ENCODE measurements at regions of chr4 and their contacts with region 1.

Region 1: DNA sequence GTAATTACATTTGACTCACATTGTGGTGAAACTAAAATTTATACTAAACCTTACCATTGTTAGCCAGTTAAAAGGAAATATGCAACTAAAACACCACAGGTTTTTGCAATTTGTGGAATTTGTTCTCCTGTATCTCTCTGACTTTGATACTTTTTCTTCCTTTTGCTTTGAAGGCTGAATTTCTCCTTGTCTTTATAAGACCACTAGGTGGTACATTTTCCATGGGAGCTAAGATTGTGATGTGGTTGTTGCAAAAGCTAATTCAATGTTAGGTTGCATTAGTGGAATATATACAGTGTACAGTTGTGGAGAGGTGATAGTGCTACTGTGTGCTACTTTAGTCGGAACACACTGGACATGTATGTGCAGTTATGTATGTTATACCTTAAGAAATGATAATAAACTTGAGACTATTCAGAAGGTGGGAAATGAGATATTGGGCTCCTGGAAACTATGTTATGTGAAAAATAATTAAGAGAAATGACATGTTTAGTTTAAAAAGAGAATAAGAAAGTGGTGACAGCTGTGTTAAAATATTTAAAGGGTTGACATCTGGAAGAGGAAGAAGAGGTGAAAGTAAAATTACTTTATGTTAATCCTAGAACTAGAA is 70.3 kb downstream of the ARL9 start:
- DNase-seq: peak; percentile 8
- ATAC-seq: peak; percentile 64
- H3K4me3 ChIP-seq: no peak overlapping the region
- H3K27ac ChIP-seq: no peak overlapping the region
- H3K4me1 ChIP-seq: no peaks in the 10 kb centered on the region
- H3K27me3 ChIP-seq: no peaks in the 10 kb centered on the region
- CTCF ChIP-seq: peak; percentile 42
- EP300 ChIP-seq: no peak
- POLR2A ChIP-seq: no peak
- RAD21 ChIP-seq: no peak

Region 2: GRCh38 chr4:55524844-55525571 is 1050.9 kb before region 1 on chr4:
- CTCF ChIA-PET with region 1: no interaction called
- POLR2A ChIA-PET with region 1: no interaction called
- in situ Hi-C with region 1: no loop called
- intact Hi-C with region 1: no loop called
- DNase-seq: no peak
- ATAC-seq: no peak
- H3K4me3 ChIP-seq: no peak overlapping the region
- H3K27ac ChIP-seq: no peak overlapping the region
- H3K4me1 ChIP-seq: no peaks in the 10 kb centered on the region
- H3K27me3 ChIP-seq: no peaks in the 10 kb centered on the region
- CTCF ChIP-seq: no peak
- EP300 ChIP-seq: no peak
- POLR2A ChIP-seq: no peak
- RAD21 ChIP-seq: no peak

Region 3: GRCh38 chr4:56467284-56468096 is 108.4 kb before region 1 on chr4 and contains the start of gene SRP72:
- CTCF ChIA-PET with region 1: no interaction called
- POLR2A ChIA-PET with region 1: no interaction called
- in situ Hi-C with region 1: no loop called
- intact Hi-C with region 1: no loop called
- DNase-seq: peak; percentile 82
- ATAC-seq: peak; percentile 91
- H3K4me3 ChIP-seq: peak within 1 kb of the TSS; percentile 79 to 90 (median 83)
- H3K27ac ChIP-seq: peak within 1 kb of the TSS; percentile 83
- H3K4me1 ChIP-seq: peaks cover 25% of the 10 kb centered on the region
- H3K27me3 ChIP-seq: no peaks in the 10 kb centered on the region; a peak in 1 of 5 replicates
- CTCF ChIP-seq: no peak
- EP300 ChIP-seq: no peak
- POLR2A ChIP-seq: peak; percentile 88 to 91
- RAD21 ChIP-seq: no peak
- total RNA-seq, gene SRP72: 75.6 and 126 TPM in 2 replicates

Region 4: GRCh38 chr4:56799824-56800756 is 224.2 kb after region 1 on chr4:
- CTCF ChIA-PET with region 1: interaction called, 14 read pairs
- POLR2A ChIA-PET with region 1: no interaction called
- in situ Hi-C with region 1: loop called (anchors 10 kb)
- intact Hi-C with region 1: loop called (anchors 1 kb)
- DNase-seq: peak; percentile 61
- ATAC-seq: peak; percentile 99
- H3K4me3 ChIP-seq: peak overlapping the region; percentile 64 to 68 (median 66)
- H3K27ac ChIP-seq: no peak overlapping the region
- H3K4me1 ChIP-seq: no peaks in the 10 kb centered on the region
- H3K27me3 ChIP-seq: no peaks in the 10 kb centered on the region; a peak in 1 of 5 replicates
- CTCF ChIP-seq: peak; percentile 93
- EP300 ChIP-seq: no peak
- POLR2A ChIP-seq: no peak
- RAD21 ChIP-seq: peak; percentile 80